Activated CD4-positive, alpha-beta T cell treated with anti-CD3 and anti-CD28 coated beads, Interleukin-2, amount 10 ng/mL, durations not matched to agents 7 days and 5 days (primary cell): ENCODE measurements at regions of chr12 and their contacts with region 1.

Region 1: DNA sequence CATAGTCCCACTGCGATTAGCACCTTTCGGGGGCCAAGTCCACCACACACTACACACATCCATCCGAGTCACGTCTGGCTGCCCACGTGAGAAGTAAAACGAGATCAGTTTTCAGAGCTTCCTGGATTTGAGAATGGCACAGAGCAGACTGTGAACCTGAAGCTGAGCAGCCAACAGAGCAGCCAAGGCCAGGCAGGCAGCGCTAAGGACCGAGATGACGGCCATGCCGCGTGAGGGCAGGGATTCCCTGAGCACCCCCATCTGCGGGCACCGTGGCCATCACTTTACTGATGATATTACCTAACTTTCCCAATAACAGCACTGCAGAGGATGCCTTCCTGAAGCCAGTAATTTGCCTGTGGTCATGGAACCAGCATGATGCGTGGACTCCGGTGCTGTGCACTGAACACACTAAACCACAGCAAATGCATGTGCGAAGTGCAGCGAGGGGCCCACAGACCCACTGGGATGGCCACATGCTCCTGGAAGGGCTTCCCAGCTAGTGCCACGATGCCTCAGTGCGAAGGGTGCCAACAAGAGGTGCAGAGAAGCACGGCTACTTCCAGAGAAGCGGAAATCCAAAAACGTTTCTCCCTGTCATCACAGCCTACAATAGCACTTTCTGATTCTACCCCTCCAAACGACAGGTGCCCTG is 56.0 kb downstream of the RNF34 start:
- DNase-seq: no peak
- H3K4me3 Mint-ChIP-seq: no peak overlapping the region
- H3K27ac Mint-ChIP-seq: no peak overlapping the region
- H3K4me1 Mint-ChIP-seq: peaks cover 43% of the 10 kb centered on the region
- H3K27me3 Mint-ChIP-seq: no peaks in the 10 kb centered on the region

Region 2: GRCh38 chr12:121443193-121443870 is 12.6 kb before region 1 on chr12:
- CTCF ChIA-PET with region 1: interaction called, 27 read pairs
- POLR2A ChIA-PET with region 1: no interaction called
- DNase-seq: peak; percentile 66
- H3K4me3 Mint-ChIP-seq: no peak overlapping the region
- H3K27ac Mint-ChIP-seq: no peak overlapping the region
- H3K4me1 Mint-ChIP-seq: no peaks in the 10 kb centered on the region
- H3K27me3 Mint-ChIP-seq: no peaks in the 10 kb centered on the region